WTC11 (cell line): ENCODE measurements at regions of chrX and their contacts with region 1.

Region 1: GRCh38 chrX:119606280-119607015 is at the start of gene NKRF:
- DNase-seq: peak; percentile 85
- ATAC-seq: peak; percentile 77
- H3K4me3 Mint-ChIP-seq: peak within 1 kb of the TSS; percentile 81
- H3K27ac Mint-ChIP-seq: peak within 1 kb of the TSS; percentile 86
- H3K4me1 Mint-ChIP-seq: peaks cover 20% of the 10 kb centered on the region
- H3K27me3 Mint-ChIP-seq: peaks cover 35% of the 10 kb centered on the region
- CTCF ChIP-seq: no peak
- total RNA-seq, gene NKRF: 13.0 to 15.0 TPM (median 13.6 TPM) in 3 replicates

Region 2: GRCh38 chrX:119374736-119375135 is 231.7 kb before region 1 on chrX:
- CTCF ChIA-PET with region 1: no interaction called
- POLR2A ChIA-PET with region 1: no interaction called
- DNase-seq: no peak
- ATAC-seq: no peak
- H3K4me3 Mint-ChIP-seq: no peak overlapping the region
- H3K27ac Mint-ChIP-seq: no peak overlapping the region
- H3K4me1 Mint-ChIP-seq: peaks cover 9% of the 10 kb centered on the region
- H3K27me3 Mint-ChIP-seq: peaks cover 4% of the 10 kb centered on the region; the same call in 1 of the 2 replicates
- CTCF ChIP-seq: no peak

Region 3: DNA sequence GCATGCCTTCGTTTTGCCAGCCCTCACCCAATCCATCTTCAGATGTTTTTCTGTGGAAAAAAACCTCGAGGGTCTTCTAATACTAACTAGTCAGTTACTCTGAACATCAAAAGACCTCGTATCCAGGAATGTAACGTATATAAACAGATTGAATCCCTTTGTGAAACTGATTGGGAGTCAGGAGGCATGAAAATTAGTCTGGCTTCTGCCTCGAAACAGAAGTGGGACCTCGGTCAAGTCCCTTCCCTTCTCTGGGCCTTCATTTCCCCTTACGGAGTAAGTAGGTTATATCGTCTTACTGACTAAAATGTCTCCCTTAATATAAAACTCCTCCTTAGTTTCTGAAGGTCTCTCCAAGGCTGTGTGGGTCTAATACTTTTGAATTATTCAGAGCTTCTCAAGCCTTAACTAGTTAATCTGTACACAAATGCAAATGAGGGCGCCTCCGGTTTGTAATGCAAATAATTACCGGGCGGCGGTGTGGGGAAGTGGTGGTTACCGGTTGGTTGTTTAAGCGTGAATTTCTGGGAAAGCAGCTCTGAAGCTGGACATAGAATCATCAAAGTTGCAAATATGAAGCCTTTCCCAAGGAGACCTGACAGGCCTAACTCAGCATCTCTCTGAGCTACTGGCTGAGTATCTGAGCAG is 11.2 kb after region 1 on chrX:
- CTCF ChIA-PET with region 1: interaction called, 10 read pairs
- POLR2A ChIA-PET with region 1: interaction called, 3 read pairs
- DNase-seq: peak; percentile 12
- ATAC-seq: peak; percentile 62
- H3K4me3 Mint-ChIP-seq: peak overlapping the region; percentile 10; the same call in 1 of the 2 replicates
- H3K27ac Mint-ChIP-seq: peak overlapping the region; percentile 63
- H3K4me1 Mint-ChIP-seq: peaks cover 49% of the 10 kb centered on the region
- H3K27me3 Mint-ChIP-seq: no peaks in the 10 kb centered on the region; the same call in 1 of the 2 replicates
- CTCF ChIP-seq: no peak

Region 4: DNA sequence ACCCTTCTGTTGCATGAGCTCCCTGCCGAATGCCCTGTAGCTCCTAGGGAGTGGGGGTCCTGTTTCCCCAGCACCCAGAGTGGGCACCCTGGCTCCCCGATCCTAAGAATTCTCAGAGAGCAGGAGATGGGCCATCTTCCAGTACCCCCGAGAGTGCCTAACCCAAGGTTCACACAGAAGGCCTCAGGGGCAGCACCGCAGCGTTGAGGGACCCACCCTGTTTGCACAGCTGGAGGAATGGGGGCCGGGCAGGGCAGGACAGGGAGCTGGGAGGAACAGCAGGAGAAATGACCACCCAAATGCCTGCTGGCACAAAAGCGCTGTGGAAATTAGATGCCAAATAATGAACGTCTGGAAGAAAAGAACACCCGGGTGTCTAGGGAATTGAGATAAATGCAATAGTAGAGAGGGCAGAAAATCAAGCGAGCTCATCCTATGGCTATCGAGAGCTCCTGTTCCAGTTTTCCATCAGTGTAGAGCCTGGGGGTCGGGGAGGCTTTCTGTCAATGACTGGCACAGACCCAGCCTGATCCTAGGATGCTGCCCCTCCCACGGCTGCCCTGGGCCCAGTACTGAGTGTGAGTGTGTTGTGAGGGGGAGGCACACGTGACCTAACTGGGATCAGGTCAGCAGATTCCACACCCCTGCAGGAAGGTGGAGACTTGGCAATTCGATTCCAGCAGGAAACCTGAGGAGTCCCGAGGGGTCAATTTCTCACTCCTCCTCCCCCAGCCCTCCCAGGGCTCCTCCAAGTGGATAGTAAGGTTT is 60.8 kb after region 1 on chrX:
- CTCF ChIA-PET with region 1: no interaction called
- POLR2A ChIA-PET with region 1: no interaction called
- DNase-seq: peak; percentile 12
- ATAC-seq: peak; percentile 28; the same call in 1 of the 2 replicates
- H3K4me3 Mint-ChIP-seq: no peak overlapping the region
- H3K27ac Mint-ChIP-seq: no peak overlapping the region
- H3K4me1 Mint-ChIP-seq: peaks cover 13% of the 10 kb centered on the region
- H3K27me3 Mint-ChIP-seq: no peaks in the 10 kb centered on the region
- CTCF ChIP-seq: no peak